Activated CD4-positive, alpha-beta memory T cell treated with anti-CD3 and anti-CD28 coated beads, Interleukin-2, amount 10 ng/mL, durations not matched to agents 7 days and 5 days (primary cell): ENCODE measurements at regions of chr1 and their contacts with region 1.

Region 1: DNA sequence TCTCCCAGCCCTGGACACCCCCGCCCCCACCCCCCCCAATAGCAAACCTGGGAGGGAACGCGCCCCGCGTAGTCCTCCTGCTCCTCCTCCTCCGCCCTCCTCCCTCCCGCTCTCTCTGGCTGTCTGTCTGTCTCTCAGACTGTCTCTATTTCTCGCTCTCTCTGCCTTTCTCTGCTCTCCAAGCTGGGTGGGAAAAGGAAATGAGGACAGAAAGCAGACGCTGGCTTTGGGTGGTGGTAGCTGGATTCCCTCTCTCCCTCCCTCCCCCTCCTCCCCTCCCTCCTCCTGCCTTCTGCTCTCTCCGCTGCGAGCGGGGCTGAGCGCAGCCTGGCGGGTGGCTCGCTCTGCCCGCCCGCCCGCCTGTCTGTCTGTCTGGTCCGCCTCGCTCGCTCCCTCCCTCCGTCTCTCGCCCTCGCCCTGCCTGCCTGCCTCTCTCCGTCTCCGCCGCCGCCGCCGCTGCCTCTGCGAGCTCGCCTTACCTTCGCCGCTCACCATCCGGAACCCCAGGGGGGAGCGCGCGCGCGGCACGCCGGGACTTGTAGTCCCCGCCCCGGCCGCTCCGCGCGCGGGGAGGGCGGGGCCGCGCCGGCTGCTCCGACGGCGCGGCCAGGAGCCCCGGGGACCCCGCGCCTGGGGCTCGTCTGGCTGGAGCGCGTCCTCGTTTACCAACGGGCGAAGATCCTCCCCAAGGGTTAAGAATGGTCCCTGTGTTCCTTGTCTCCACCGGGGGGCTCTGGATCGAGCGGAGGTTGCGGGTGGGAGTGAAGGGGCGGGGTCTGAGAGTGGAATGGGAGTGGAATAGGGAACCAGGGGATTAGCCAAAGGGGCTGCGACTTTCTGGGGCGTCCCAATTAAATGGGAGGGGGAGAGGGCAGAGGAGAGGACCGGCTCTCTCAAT is at the start of gene AHDC1:
- DNase-seq: peak; percentile 92
- H3K4me3 Mint-ChIP-seq: peak within 1 kb of the TSS; percentile 97
- H3K27ac Mint-ChIP-seq: peak within 1 kb of the TSS; percentile 80
- H3K4me1 Mint-ChIP-seq: peaks cover 48% of the 10 kb centered on the region
- H3K27me3 Mint-ChIP-seq: peaks cover 8% of the 10 kb centered on the region
- total RNA-seq, gene AHDC1: 16.9 to 18.9 TPM

Region 2: GRCh38 chr1:27402349-27402754 is 201.6 kb before region 1 on chr1:
- CTCF ChIA-PET with region 1: interaction called, 12 read pairs
- POLR2A ChIA-PET with region 1: no interaction called
- DNase-seq: no peak
- H3K4me3 Mint-ChIP-seq: no peak overlapping the region
- H3K27ac Mint-ChIP-seq: no peak overlapping the region
- H3K4me1 Mint-ChIP-seq: peaks cover 3% of the 10 kb centered on the region
- H3K27me3 Mint-ChIP-seq: no peaks in the 10 kb centered on the region

Region 3: DNA sequence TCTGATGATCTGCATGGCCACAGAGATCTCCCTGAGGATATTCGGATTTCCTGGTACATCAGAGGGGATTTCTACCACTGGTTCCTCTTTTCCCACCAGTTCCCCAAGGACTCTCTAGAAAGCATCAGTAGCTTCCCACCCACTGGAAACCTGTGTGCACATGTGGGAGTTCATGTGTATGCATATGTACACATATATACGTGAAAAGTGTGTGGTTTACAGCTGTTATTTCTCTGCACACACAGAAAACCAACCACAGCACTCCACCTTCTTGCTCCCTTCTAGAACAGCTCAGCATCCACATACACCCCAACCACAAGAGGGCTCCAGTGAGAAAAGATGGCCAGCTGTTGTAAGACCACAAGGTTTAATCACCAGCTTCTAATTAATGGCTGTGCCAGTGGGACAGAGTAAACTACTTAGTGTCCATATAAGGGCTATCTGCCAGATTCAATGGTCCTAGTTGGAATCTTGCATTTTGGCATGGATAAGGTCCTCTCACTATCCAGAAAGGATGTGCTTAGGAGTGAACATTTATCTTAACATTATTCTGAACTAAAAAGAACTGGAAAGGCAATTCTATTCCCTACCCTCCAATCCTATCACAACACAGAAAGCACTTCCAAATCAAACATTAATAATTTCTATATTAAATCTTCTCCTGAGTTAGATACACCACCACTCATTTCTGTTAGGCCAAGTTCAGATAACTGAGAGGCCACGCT is 187.4 kb before region 1 on chr1:
- CTCF ChIA-PET with region 1: interaction called, 89 read pairs
- POLR2A ChIA-PET with region 1: interaction called, 4 read pairs
- DNase-seq: peak; percentile 63
- H3K4me3 Mint-ChIP-seq: no peak overlapping the region
- H3K27ac Mint-ChIP-seq: peak overlapping the region; percentile 25
- H3K4me1 Mint-ChIP-seq: peaks cover 43% of the 10 kb centered on the region
- H3K27me3 Mint-ChIP-seq: no peaks in the 10 kb centered on the region

Region 4: GRCh38 chr1:27525296-27526272 is 78.3 kb before region 1 on chr1:
- CTCF ChIA-PET with region 1: interaction called, 21 read pairs
- POLR2A ChIA-PET with region 1: interaction called, 25 read pairs
- DNase-seq: peak; percentile 73
- H3K4me3 Mint-ChIP-seq: peak overlapping the region; percentile 68
- H3K27ac Mint-ChIP-seq: peak overlapping the region; percentile 61
- H3K4me1 Mint-ChIP-seq: peaks cover 70% of the 10 kb centered on the region
- H3K27me3 Mint-ChIP-seq: peaks cover 4% of the 10 kb centered on the region

Region 5: DNA sequence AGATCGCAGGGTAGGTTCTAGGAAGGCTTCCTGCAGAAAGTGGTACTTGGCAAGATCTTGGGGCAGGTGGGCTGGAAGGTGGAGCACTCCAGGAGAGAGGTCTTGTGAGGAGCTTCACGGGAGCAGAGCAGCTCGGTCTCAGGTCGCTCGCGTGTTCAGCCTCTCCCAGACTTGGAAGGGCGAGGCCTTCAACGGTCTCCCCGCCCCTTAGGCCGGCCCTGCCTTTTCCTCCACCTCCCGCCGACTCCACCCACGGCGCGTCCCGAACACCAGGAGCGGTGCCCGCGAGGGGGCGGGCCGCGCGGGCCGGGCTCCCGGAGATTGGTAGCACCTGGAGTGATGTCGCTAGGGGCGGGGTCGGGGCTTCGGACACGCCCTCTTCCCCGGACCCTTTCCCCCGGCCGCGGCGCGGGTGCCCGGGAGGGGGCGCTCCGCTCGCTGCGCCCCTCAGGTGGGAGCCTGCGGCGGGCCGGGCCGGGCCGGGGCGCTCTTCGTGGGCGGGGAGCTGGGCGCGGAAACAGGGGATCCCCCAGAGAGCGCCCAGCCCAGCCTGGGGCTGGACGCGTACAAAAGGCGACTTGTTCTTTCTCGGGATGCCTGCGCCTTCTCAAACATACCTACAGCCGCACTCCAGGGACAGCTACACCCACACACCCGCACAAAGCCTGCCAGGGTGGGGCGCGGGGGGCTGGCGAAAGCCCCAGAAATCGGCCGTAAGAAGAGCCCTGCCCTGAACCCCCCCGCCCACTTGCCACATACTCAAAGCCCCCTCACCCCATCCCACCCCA is 35.4 kb before region 1 on chr1:
- CTCF ChIA-PET with region 1: interaction called, 12 read pairs
- POLR2A ChIA-PET with region 1: no interaction called
- DNase-seq: peak; percentile 96
- H3K4me3 Mint-ChIP-seq: peak overlapping the region; percentile 73
- H3K27ac Mint-ChIP-seq: no peak overlapping the region
- H3K4me1 Mint-ChIP-seq: peaks cover 24% of the 10 kb centered on the region
- H3K27me3 Mint-ChIP-seq: peaks cover 6% of the 10 kb centered on the region

Region 6: GRCh38 chr1:27618341-27619082 is 14.6 kb after region 1 on chr1:
- CTCF ChIA-PET with region 1: interaction called, 18 read pairs
- POLR2A ChIA-PET with region 1: interaction called, 5 read pairs
- DNase-seq: peak; percentile 73
- H3K4me3 Mint-ChIP-seq: no peak overlapping the region
- H3K27ac Mint-ChIP-seq: peak overlapping the region; percentile 82
- H3K4me1 Mint-ChIP-seq: peaks cover 50% of the 10 kb centered on the region
- H3K27me3 Mint-ChIP-seq: no peaks in the 10 kb centered on the region

Region 7: GRCh38 chr1:27650539-27651175 is 46.7 kb after region 1 on chr1:
- CTCF ChIA-PET with region 1: interaction called, 10 read pairs
- POLR2A ChIA-PET with region 1: no interaction called
- DNase-seq: no peak
- H3K4me3 Mint-ChIP-seq: no peak overlapping the region
- H3K27ac Mint-ChIP-seq: no peak overlapping the region
- H3K4me1 Mint-ChIP-seq: peaks cover 9% of the 10 kb centered on the region
- H3K27me3 Mint-ChIP-seq: no peaks in the 10 kb centered on the region

Region 8: DNA sequence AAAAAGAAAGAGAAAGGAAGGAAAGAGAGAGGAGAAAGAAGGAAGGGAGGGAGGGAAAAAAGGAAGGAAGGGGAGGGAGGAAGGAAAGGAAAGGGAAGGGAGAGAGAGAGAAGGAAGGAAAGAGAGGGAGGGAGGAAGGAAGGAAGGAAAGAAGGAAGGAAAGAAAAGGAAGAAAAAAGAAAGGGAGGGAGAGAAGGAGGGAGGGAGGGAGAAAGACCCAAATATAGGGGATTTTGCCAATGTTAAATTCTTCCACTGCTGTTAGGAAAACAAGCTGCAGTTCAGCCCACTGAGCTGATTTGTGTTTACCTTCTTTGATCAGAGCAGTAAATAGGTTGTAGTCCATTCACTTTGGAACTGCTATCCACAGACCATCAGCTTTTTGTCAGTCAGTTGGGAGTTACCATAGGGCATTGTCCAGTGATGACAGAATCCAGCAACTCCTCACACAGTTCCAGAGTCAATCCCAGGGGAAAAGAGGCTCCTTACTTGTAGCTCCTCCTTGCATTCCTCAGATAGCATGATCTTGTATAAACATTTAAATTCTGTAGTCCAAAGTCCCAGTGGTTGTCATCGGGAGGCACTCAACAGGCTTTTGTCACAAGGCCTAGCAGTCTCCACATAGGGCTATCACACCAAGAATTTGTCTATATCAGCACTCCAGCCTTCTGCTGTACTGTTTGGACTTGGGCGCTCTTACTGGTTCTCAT is 213.1 kb after region 1 on chr1:
- CTCF ChIA-PET with region 1: no interaction called
- POLR2A ChIA-PET with region 1: no interaction called
- DNase-seq: no peak
- H3K4me3 Mint-ChIP-seq: no peak overlapping the region
- H3K27ac Mint-ChIP-seq: no peak overlapping the region
- H3K4me1 Mint-ChIP-seq: no peaks in the 10 kb centered on the region
- H3K27me3 Mint-ChIP-seq: no peaks in the 10 kb centered on the region